MCF 10A (cell line): ENCODE measurements at regions of chr7 and their contacts with region 1.

Region 1: DNA sequence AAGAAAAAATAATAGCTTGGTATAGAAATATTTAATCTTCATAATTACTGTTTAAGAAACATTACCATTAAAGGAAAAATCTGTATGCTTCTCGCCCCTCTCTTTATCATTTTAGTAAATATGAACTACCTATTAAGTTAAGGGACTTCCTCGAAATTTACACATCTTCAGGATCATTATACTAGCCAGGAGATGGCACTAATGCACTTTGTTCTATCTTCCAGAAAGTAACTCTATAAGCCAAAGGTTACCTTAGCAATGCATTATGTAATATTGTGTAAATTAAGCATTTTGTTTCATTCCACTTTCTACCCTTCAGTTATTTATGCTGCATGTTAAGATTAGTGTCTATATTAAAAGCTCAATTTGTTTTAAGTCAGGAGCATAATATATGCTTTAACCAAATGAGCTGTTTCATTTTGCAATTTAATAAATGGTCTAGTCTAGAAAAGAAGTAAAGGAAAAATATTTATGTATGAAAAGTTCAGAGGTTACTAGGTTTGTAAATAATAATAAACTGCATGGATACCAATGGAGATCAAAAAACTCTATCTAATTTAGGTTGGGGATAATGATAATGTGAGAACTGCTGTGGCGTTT is 128.4 kb downstream of the ANKRD7 start:
- DNase-seq: peak; percentile 42
- H3K4me3 Mint-ChIP-seq: no peak overlapping the region
- H3K27ac Mint-ChIP-seq: no peak overlapping the region
- H3K4me1 Mint-ChIP-seq: peaks cover 6% of the 10 kb centered on the region
- H3K27me3 Mint-ChIP-seq: no peaks in the 10 kb centered on the region
- CTCF ChIP-seq: peak; percentile 46

Region 2: DNA sequence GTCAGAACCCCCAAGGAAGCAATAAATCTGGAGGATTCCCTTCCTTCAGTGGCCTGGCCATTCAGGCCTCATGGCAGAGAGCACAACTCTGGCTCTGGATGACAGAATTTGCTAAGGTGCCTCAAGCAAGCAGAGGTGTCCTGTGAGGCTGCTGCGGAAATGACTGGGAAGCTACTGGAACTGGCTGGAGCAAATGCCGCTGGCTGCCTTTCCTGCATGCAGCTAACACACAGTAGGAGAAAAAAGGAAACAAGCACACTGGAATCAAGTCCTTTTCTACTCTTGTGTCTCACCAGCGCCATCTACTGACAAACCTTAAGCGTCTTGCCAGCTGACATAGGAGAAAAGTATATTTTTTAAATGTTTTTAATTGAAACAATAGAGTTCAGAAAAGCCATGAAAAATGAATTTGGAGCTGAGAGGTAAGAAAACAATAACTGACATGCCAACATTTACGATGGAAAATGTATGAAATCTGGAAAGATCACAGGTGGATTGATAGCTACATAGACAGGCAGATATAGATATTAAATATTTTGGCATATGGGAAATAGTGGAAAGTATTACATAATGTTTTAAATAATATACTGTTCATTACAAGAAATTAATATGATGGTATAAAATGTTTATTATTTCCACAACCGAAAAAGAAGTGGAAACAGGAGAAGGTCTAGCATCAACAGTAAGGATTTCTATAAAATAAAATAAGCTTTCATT is 823.1 kb after region 1 on chr7:
- CTCF ChIA-PET with region 1: interaction called, 7 read pairs
- POLR2A ChIA-PET with region 1: no interaction called
- intact Hi-C with region 1: loop called (anchors 1 kb)
- DNase-seq: peak; percentile 79
- H3K4me3 Mint-ChIP-seq: no peak overlapping the region
- H3K27ac Mint-ChIP-seq: no peak overlapping the region
- H3K4me1 Mint-ChIP-seq: no peaks in the 10 kb centered on the region
- H3K27me3 Mint-ChIP-seq: peaks cover 75% of the 10 kb centered on the region
- CTCF ChIP-seq: peak; percentile 78